ENCODE measurements at regions of chr17 and their contacts with region 1.

Region 1: GRCh38 chr17:39863918-39864746 is at the start of gene IKZF3:
- DNase-seq: peak; percentile 46
- ATAC-seq: peak; percentile 98
- H3K4me3 ChIP-seq: no peak within 1 kb of the TSS; a peak in 1 of 6 replicates
- H3K27ac ChIP-seq: no peak within 1 kb of the TSS
- H3K4me1 ChIP-seq: peaks cover 5% of the 10 kb centered on the region
- H3K27me3 ChIP-seq: peaks cover 6 to 55% of the 10 kb centered on the region in 2 experiments
- CTCF ChIP-seq: peak; percentile 83
- EP300 ChIP-seq: 0 out of 4 replicates have a peak, but pooled peaks of 1 of the 2 experiments have one; percentile 10
- POLR2A ChIP-seq: no peak
- RAD21 ChIP-seq: peak; percentile 89
- total RNA-seq, gene IKZF3: not detected in 2 replicates

Region 2: DNA sequence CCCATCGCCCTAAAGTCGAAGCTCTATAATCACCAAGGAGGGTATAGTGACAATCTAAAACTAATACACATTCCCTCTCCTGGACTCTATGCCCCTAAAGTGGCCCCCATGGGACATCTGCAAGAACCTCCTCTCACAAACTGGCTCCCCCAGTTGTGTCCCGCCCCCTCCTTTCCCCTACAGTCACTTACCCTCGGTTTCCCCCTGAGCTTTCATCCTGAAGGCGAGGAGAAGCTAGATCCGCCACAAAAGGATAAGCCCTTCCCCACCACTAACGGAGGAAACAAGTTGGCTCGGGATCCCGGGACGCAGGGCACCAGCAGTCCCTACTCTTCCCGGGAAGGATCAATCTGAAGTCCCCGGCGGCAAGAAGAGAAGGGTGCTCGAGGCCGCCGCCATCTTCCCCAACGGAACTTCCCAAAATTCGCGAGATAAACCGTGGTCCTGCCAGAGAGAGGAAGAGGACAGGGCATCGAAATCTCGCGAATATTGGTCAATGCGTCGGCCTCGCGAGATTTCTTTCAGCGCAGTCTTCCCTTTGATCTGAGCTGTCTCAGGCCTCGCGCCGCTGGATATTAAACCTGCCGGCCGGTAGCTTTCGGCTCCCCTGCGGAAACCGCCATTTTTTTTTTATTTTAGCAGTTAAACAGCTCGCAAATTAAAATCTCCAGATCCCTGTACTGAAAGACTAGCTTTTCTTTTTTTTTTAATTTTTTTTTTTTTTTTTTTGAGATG is 413.1 kb before region 1 on chr17 and contains the start of gene MED1:
- CTCF ChIA-PET with region 1: no interaction called
- POLR2A ChIA-PET with region 1: no interaction called
- in situ Hi-C with region 1: no loop called
- intact Hi-C with region 1: no loop called
- DNase-seq: peak; percentile 99
- ATAC-seq: peak; percentile 79
- H3K4me3 ChIP-seq: peak within 1 kb of the TSS; percentile 92 to 98 (median 92)
- H3K27ac ChIP-seq: peak within 1 kb of the TSS; percentile 94
- H3K4me1 ChIP-seq: peaks cover 65% of the 10 kb centered on the region
- H3K27me3 ChIP-seq: no peaks in the 10 kb centered on the region; a peak in 1 of 5 replicates
- CTCF ChIP-seq: no peak
- EP300 ChIP-seq: 0 out of 4 replicates have a peak, but pooled peaks of 1 of the 2 experiments have one; percentile 36
- POLR2A ChIP-seq: peak; percentile 81 to 94
- RAD21 ChIP-seq: no peak
- total RNA-seq, gene MED1: 37.5 and 60.9 TPM in 2 replicates

Region 3: GRCh38 chr17:39730095-39730921 is 133.8 kb before region 1 on chr17 and contains the start of gene MIEN1:
- CTCF ChIA-PET with region 1: no interaction called
- POLR2A ChIA-PET with region 1: no interaction called
- in situ Hi-C with region 1: no loop called
- intact Hi-C with region 1: loop called (anchors 1 kb)
- DNase-seq: peak; percentile 78
- ATAC-seq: peak; percentile 89
- H3K4me3 ChIP-seq: peak within 1 kb of the TSS; percentile 68 to 81 (median 74)
- H3K27ac ChIP-seq: peak within 1 kb of the TSS; percentile 65
- H3K4me1 ChIP-seq: peaks cover 21% of the 10 kb centered on the region
- H3K27me3 ChIP-seq: no peaks in the 10 kb centered on the region
- CTCF ChIP-seq: peak; percentile 93
- EP300 ChIP-seq: 0 out of 4 replicates have a peak, but pooled peaks have one; percentile 3 to 49
- POLR2A ChIP-seq: peak; percentile 56 to 84
- RAD21 ChIP-seq: peak; percentile 97
- total RNA-seq, gene MIEN1: 40.6 and 48.6 TPM in 2 replicates

Region 4: DNA sequence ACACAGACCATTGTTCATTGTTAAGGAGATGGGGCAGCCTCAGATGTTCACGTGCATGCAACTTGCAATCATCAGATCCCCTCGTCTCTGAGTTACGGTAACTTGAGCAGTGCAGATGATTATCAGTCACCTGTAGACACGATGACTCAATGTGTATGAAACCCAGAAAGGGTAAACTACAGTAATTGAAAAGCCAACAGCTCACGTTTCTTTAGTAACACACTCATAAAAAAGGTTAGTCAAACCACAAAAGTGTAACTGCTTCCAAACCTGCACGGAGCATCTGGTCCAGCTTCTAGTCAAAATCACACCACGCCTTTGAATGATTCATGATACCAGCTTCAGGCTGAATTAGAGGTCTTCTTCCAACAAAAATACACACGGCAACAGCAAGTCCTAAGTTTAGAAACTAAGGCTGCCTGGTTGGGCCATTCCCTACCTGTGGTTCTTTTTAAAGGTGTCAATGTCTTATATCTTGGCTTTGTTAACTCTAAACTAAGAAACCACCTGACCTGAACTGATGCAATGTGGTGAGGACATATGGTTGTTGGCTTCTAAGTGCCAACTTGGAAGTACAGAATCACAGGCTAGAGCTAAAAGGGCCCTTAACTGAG is 94.1 kb before region 1 on chr17:
- CTCF ChIA-PET with region 1: no interaction called
- POLR2A ChIA-PET with region 1: no interaction called
- in situ Hi-C with region 1: no loop called
- intact Hi-C with region 1: loop called (anchors 10 kb)
- DNase-seq: peak; percentile 55
- ATAC-seq: no peak
- H3K4me3 ChIP-seq: no peak overlapping the region
- H3K27ac ChIP-seq: no peak overlapping the region
- H3K4me1 ChIP-seq: peaks cover 18% of the 10 kb centered on the region
- H3K27me3 ChIP-seq: peaks cover 0 to 48% of the 10 kb centered on the region in 2 experiments
- CTCF ChIP-seq: no peak
- EP300 ChIP-seq: peak in 1 of 2 experiments; percentile 10; a peak in 1 of 4 replicates
- POLR2A ChIP-seq: no peak
- RAD21 ChIP-seq: no peak